CD14-positive monocyte (primary cell): ENCODE measurements at regions of chr19 and their contacts with region 1.

Region 1: DNA sequence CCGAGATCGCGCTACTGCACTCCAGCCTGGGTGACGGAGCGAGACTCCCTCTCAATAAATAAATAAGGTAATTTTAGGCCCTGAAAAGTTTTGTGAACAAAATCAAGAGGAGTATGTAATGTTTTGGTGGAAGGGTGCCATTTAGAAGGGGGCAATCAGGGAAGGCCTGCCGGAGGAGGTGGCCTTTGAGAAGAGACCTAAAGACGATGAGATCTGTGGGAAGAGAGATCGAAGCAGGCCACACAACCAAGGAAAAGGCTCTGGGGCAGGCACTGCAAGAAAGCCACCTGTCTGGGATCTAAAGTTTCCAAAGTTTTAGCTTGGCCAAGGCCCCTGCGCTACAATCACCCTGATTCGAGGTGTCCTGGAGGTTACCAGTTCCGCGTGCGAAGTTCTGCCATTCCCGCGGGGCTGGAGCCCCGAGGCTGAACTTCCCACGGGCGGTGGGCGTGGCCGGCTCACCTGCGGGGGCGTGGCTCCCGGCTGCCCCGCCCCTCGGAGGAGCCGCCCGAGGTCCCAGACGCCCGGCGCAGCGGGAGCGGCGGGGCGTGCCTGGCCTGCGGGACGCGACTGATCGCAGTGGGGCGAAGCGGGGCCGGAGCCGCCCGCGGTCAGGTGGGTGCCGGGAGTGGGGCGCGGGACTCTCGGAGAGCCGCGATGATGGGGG is at the start of gene KLC3:
- DNase-seq: no peak
- H3K4me3 ChIP-seq: no peak within 1 kb of the TSS
- H3K4me3 Mint-ChIP-seq: peak within 1 kb of the TSS in 1 of 2 donors; percentile 80
- H3K27ac ChIP-seq: no peak within 1 kb of the TSS
- H3K27ac Mint-ChIP-seq: peak within 1 kb of the TSS in 1 of 7 donors; percentile 61
- H3K4me1 ChIP-seq: peaks cover 4 to 11% of the 10 kb centered on the region in 2 donors
- H3K4me1 Mint-ChIP-seq: peaks cover 4% of the 10 kb centered on the region
- H3K27me3 ChIP-seq: peaks cover 4 to 34% of the 10 kb centered on the region in 2 donors
- H3K27me3 Mint-ChIP-seq: peaks cover 16 to 24% (median 16%) of the 10 kb centered on the region in 3 donors
- CTCF ChIP-seq: no peak
- polyA plus RNA-seq, gene KLC3: not detected

Region 2: GRCh38 chr19:45147835-45148676 is 192.3 kb before region 1 on chr19:
- intact Hi-C with region 1: loop called in 1 of 2 experiments (anchors 10 kb)
- DNase-seq: no peak
- H3K4me3 ChIP-seq: no peak overlapping the region
- H3K4me3 Mint-ChIP-seq: no peak overlapping the region
- H3K27ac ChIP-seq: no peak overlapping the region
- H3K27ac Mint-ChIP-seq: no peak overlapping the region
- H3K4me1 ChIP-seq: peaks cover 9 to 14% of the 10 kb centered on the region in 2 donors
- H3K4me1 Mint-ChIP-seq: peaks cover 10% of the 10 kb centered on the region
- H3K27me3 ChIP-seq: peaks cover 8 to 22% of the 10 kb centered on the region in 2 donors
- H3K27me3 Mint-ChIP-seq: peaks cover 17 to 27% (median 22%) of the 10 kb centered on the region in 3 donors
- CTCF ChIP-seq: no peak

Region 3: DNA sequence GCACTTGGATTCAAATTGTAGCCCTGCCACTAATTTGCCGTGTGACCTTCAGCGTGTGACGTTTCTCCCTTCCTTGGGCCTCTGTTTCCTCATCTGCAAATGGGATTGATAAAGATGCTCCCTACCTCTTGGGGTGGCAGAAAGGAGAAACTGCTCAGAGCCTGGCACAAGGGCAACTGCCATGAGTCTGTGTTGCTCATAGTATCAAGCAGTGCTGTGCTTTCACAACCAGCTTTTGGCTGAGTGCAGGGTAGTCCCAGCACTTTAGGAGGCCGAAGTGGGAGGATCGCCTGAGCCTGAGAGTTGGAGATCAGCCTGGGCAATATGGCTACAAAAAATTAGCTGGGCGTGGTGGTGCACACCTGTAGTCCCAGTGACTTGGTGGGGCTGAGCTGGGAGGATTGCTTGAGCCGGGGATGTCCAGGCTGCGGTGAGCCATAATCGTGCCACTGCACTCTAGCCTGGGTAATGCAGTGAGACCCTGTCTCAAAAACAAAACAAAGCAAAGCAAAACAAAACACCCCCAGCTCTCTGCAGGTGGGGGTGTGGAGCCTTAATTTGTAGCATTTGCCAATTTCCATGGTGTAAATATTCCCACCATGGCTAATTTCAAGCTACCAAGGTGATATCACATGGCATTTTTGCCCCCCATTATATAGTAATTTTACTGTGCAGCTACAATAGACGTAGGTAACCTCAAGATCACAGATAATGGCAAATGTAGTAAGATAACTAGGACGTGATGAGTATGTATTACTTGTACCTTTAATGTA is 90.9 kb before region 1 on chr19:
- intact Hi-C with region 1: loop called in 1 of 2 experiments (anchors 2 kb)
- DNase-seq: peak in 2 of 3 donors; percentile 11 to 29
- H3K4me3 ChIP-seq: no peak overlapping the region
- H3K4me3 Mint-ChIP-seq: no peak overlapping the region
- H3K27ac ChIP-seq: no peak overlapping the region
- H3K27ac Mint-ChIP-seq: peak overlapping the region in 6 of 7 donors; percentile 0 to 45 (median 18)
- H3K4me1 ChIP-seq: peaks cover 29 to 42% of the 10 kb centered on the region in 2 donors
- H3K4me1 Mint-ChIP-seq: peaks cover 42% of the 10 kb centered on the region
- H3K27me3 ChIP-seq: no peaks in the 10 kb centered on the region
- H3K27me3 Mint-ChIP-seq: peaks cover 7 to 11% (median 7%) of the 10 kb centered on the region in 3 donors
- CTCF ChIP-seq: no peak